Heart left ventricle (tissue), 16 donors: ENCODE measurements at regions of chr2 and their contacts with region 1.

Region 1: DNA sequence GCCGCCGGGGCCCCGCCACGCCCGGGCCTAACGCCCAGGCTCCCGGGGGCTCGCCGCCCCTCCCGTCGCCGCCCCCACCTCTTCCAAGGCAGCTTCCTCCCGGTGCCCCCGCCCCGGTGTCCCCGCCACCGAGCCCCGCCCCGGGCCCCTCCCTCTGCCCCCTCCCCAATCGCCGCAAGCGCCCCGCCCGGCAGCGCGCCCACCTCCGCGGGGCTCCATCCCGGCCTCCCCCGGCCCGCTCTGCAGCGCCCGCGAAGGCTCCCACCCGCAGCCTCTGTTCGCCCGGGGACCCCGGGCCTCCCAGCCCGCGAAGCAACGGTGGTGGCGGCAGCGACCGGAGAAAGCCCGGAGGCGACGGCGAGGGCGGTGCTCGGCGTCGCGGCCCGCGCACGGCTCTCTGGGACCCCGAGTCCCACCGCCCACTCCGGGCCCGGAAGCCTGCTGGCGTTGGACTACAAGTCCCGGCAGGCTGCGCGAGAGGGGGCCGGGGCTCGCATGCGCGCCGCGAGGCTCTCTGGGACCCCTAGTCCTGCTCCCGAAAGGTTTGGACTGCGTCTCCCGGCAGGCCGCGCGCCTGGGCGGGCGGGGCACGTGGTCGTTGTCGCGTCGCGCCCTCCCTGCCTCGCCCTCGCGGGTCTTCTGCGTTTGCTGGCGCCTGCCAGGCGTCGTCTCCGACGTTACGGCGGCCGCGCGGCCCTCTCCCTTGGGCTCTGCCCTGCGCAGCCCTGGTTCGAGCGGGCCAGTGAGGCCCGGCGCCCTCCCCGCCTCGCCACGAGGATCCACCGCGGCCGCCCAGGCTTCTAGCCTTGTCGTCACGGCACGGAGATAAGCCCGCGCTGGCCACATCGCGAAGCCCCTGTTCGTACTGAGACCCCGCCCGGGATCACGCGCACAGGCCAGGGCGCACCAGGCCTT is at the start of gene STK25:
- DNase-seq: peak; percentile 98 to 99 (median 99)
- ATAC-seq: peak; percentile 97 to 99 (median 98)
- H3K4me3 ChIP-seq: peak within 1 kb of the TSS; percentile 61 to 99 (median 90)
- H3K27ac ChIP-seq: peak within 1 kb of the TSS; percentile 58 to 97 (median 89)
- H3K4me1 ChIP-seq: peaks cover 13 to 53% (median 33%) of the 10 kb centered on the region in 12 donors
- H3K27me3 ChIP-seq: no peaks in the 10 kb centered on the region
- CTCF ChIP-seq: no peak
- POLR2A ChIP-seq: peak in 1 of 2 donors; percentile 81
- total RNA-seq, gene STK25: 76.8 to 186 (median 94.7) TPM

Region 2: GRCh38 chr2:240277073-240277806 is 1231.3 kb before region 1 on chr2:
- intact Hi-C with region 1: no loop called
- DNase-seq: peak in 2 of 5 donors; percentile 21 to 32
- ATAC-seq: peak in 3 of 4 donors; percentile 32 to 70 (median 61)
- H3K4me3 ChIP-seq: no peak overlapping the region
- H3K27ac ChIP-seq: no peak overlapping the region
- H3K4me1 ChIP-seq: peaks cover 0 to 18% (median 0%) of the 10 kb centered on the region in 12 donors
- H3K27me3 ChIP-seq: peaks cover 0 to 5% (median 0%) of the 10 kb centered on the region in 9 donors
- CTCF ChIP-seq: no peak
- POLR2A ChIP-seq: no peak

Region 3: DNA sequence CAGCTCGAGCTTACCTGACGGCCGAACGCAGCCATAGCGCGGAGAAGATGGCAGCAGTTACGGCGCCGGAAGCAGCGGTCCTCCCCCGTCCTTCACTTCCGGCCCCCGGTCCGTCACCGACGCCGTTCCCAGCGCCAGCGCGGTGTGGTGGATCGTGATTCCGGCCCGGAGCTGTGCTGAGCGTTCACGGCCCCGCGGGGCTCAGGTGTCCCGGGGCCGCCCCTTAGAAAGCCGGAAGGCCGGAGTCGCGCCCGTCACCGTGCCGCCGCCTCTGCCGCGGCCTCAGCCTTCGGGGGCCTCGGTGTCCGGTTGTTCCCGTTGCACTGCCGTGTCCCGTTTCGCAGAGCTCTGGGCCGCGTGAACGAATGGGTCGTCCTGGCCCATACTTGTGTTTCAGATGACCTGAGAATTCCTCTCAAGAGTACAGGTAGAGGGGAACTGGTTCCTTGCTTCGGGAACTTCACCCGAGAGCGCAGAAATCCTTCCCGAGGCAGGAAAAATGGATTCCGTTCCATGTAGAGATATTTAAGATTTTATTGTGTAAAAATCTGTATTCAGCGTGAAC is 406.2 kb before region 1 on chr2 and contains the start of gene MTERF4:
- intact Hi-C with region 1: loop called in 1 of 10 experiments (anchors 2 kb)
- DNase-seq: peak; percentile 87 to 94 (median 90)
- ATAC-seq: peak; percentile 97 to 100 (median 99)
- H3K4me3 ChIP-seq: peak within 1 kb of the TSS; percentile 59 to 99 (median 86)
- H3K27ac ChIP-seq: peak within 1 kb of the TSS; percentile 68 to 92 (median 85)
- H3K4me1 ChIP-seq: peaks cover 5 to 26% (median 18%) of the 10 kb centered on the region in 12 donors
- H3K27me3 ChIP-seq: no peaks in the 10 kb centered on the region
- CTCF ChIP-seq: peak in 1 of 12 donors; percentile 5
- POLR2A ChIP-seq: no peak
- total RNA-seq, gene MTERF4: 16.4 to 29.1 (median 22.3) TPM

Region 4: DNA sequence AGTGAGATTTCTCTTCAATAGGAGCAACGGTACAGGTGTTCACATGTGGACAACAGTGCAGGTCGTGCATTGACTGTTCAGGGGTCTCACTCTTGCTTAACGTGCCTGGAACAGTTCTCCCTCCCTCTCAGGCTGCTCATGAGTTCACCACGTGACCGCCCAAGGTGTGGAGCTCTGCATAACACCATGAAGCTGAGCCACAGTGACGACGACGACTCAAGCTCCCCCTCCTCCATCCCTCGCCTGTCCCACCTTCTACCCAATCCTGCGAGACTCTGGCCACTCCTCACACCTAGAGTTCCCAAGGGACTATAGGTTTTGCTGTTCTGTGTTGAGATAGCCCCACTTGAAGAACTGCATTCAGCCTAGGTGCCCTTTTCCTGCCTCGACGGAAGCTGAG is 43.0 kb before region 1 on chr2:
- intact Hi-C with region 1: no loop called
- DNase-seq: no peak
- ATAC-seq: no peak
- H3K4me3 ChIP-seq: no peak overlapping the region
- H3K27ac ChIP-seq: no peak overlapping the region
- H3K4me1 ChIP-seq: no peaks in the 10 kb centered on the region
- H3K27me3 ChIP-seq: no peaks in the 10 kb centered on the region
- CTCF ChIP-seq: no peak
- POLR2A ChIP-seq: no peak

Region 5: GRCh38 chr2:241479026-241479898 is 29.2 kb before region 1 on chr2:
- intact Hi-C with region 1: no loop called
- DNase-seq: no peak
- ATAC-seq: no peak
- H3K4me3 ChIP-seq: no peak overlapping the region
- H3K27ac ChIP-seq: no peak overlapping the region
- H3K4me1 ChIP-seq: no peaks in the 10 kb centered on the region
- H3K27me3 ChIP-seq: no peaks in the 10 kb centered on the region
- CTCF ChIP-seq: no peak
- POLR2A ChIP-seq: no peak

Region 6: DNA sequence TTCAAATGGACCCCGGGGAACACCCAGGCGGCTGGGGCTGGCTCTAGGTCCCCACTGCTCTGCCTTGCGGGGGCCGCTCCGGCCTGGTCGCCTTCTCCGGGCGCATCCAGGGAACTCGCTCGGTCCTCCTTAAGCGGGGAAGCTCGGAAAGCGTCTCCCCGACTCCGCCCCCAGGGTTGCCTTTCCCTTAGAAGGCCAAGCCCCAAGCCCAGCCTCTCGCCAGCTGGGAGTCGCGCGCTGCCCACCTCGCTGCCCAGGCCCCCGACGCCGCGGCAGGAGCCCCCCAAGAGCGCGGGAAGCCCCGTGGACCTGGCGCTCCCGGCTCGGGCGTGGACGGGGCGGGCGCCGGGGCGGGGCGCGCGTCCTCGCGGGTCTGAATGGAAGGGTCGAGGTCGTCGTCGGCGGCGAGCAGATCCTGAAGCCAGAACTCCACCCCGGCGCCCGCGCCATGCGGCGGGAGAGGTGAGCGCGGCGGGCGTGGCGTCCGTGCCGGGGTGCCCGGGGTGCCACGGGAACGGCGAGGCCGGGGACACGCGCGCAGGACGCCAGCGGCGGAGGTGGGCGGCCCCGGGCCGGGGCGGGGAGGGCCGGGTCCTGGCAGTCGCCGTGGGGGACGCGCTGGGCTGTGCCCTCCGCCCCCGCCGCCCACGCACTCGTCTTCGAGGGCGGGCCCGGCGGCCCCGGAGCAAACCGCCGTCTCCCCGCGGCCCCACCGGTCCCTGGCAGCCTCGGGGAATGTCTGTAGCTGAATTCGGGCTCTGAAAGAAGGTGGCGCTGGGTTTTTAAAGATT is 50.2 kb after region 1 on chr2 and contains the start of gene BOK:
- intact Hi-C with region 1: loop called in 3 of 10 experiments (anchors 5 kb)
- DNase-seq: peak; percentile 59 to 77 (median 70)
- ATAC-seq: peak in 3 of 4 donors; percentile 35 to 63 (median 39)
- H3K4me3 ChIP-seq: peak within 1 kb of the TSS; percentile 50 to 90 (median 66)
- H3K27ac ChIP-seq: peak within 1 kb of the TSS; percentile 20 to 86 (median 72)
- H3K4me1 ChIP-seq: peaks cover 0 to 51% (median 22%) of the 10 kb centered on the region in 12 donors
- H3K27me3 ChIP-seq: peaks cover 0 to 27% (median 2%) of the 10 kb centered on the region in 9 donors
- CTCF ChIP-seq: no peak
- POLR2A ChIP-seq: no peak
- total RNA-seq, gene BOK: 1.7 to 22.3 (median 8.4) TPM

Region 7: DNA sequence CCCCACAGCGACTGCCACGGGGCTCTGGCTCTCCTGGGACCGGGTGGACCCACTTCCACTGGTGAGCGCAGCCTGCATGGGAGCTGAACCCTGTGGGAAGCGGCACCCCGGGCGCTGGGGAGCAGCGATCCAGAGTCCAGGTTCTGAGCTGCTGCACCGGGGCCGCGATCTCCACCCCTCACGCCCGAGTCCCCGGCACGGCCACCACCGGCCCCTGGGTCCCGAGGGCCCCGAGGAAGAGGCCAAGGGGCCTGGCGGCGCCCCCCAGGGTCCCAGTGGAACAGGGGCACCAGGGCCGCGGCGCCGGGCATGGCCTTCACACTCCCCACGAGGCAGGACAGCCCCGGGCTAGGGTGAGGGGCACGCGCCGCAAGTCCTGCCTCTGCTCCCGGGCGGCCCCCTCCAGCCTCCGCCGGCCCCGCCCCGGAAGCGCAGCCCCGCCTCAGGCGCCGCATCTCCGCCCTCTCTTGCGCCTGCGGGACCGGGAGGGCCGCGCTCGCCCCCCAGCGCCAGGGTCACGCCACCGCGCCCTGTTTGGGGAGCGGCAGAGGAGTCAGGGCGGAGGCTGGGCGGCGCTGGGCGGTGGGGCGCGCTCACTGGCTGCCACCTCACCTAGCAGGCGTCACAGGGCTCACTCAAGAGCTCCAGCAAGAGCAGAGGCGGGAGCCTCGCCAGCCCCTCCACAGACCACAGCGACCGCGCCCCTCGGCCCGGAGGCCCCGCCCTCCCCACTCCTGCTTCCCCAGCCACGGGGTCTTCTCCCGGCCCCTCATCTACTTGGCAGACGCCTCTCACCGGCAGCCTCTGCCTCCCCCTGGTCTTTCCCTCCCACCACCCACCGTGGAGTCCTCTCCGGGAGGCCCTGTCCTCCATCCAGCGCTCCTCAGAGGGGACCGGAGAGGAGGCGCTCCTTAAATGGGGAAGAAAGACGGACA is 101.6 kb after region 1 on chr2:
- intact Hi-C with region 1: loop called in 7 of 10 experiments (anchors 2 to 10 kb)
- DNase-seq: peak; percentile 79 to 92 (median 89)
- ATAC-seq: peak; percentile 81 to 96 (median 96)
- H3K4me3 ChIP-seq: peak overlapping the region; percentile 54 to 69 (median 61)
- H3K27ac ChIP-seq: peak overlapping the region; percentile 3 to 90 (median 72)
- H3K4me1 ChIP-seq: peaks cover 0 to 34% (median 16%) of the 10 kb centered on the region in 12 donors
- H3K27me3 ChIP-seq: no peaks in the 10 kb centered on the region
- CTCF ChIP-seq: peak; percentile 55 to 82 (median 70)
- POLR2A ChIP-seq: peak in 1 of 2 donors; percentile 47

Region 8: DNA sequence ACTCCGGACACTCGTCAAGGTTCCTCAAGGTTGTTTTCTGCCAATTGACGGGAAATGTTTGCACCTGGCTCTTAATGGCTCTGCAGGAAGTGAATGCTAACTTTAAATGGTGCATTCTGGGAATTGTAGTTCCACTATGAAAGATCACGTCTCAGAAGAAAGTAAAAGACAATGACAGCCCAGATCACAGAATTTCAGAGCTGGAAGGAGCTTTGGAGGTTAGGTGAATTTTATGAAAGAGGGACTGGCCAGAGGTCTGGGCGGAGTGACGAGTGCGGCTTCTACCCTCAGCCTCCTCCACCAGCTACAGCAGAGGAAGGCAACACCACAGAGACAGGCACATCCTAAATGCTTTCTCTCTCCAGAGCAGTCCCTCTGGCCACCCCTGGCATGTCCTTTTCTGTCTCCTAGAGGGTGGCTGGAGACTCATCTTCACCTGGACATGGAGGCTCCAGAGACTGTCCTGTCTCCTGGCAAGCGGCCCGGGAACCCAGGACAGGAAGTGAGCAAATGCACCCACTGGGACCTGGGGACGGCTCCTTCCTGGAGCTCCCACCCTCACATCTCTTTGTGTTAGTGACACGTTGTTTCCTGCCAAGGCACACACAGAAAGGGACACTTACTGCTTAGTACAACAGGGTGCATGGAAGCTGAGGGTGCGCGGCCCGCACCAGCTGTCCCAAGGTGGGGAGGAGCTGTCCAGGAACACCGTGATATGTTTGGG is 109.1 kb after region 1 on chr2:
- intact Hi-C with region 1: loop called in 6 of 10 experiments (anchors 5 to 10 kb)
- DNase-seq: peak; percentile 59 to 85 (median 75)
- ATAC-seq: peak; percentile 57 to 87 (median 60)
- H3K4me3 ChIP-seq: peak overlapping the region; percentile 17 to 52 (median 45)
- H3K27ac ChIP-seq: peak overlapping the region; percentile 62 to 92 (median 80)
- H3K4me1 ChIP-seq: peaks cover 0 to 47% (median 24%) of the 10 kb centered on the region in 12 donors
- H3K27me3 ChIP-seq: no peaks in the 10 kb centered on the region
- CTCF ChIP-seq: no peak
- POLR2A ChIP-seq: no peak

Region 9: GRCh38 chr2:241637000-241637791 is 128.7 kb after region 1 on chr2 and contains the starts of genes ATG4B and THAP4:
- intact Hi-C with region 1: loop called in 1 of 10 experiments (anchors 2 kb)
- DNase-seq: peak; percentile 89 to 94 (median 92)
- ATAC-seq: peak; percentile 78 to 92 (median 90)
- H3K4me3 ChIP-seq: peak within 1 kb of the TSS; percentile 55 to 94 (median 88)
- H3K27ac ChIP-seq: peak within 1 kb of the TSS; percentile 96 to 100 (median 99)
- H3K4me1 ChIP-seq: peaks cover 8 to 57% (median 45%) of the 10 kb centered on the region in 12 donors
- H3K27me3 ChIP-seq: no peaks in the 10 kb centered on the region
- CTCF ChIP-seq: no peak
- POLR2A ChIP-seq: peak in 1 of 2 donors; percentile 59
- total RNA-seq, gene ATG4B: 37.8 to 67.9 (median 48.3) TPM
- total RNA-seq, gene THAP4: 61.7 to 106 (median 74.2) TPM

Region 10: GRCh38 chr2:241734467-241735208 is 226.1 kb after region 1 on chr2 and contains the start of gene D2HGDH:
- intact Hi-C with region 1: loop called in 1 of 10 experiments (anchors 10 kb)
- DNase-seq: peak; percentile 94 to 98 (median 94)
- ATAC-seq: peak; percentile 81 to 96 (median 94)
- H3K4me3 ChIP-seq: peak within 1 kb of the TSS; percentile 67 to 100 (median 94)
- H3K27ac ChIP-seq: peak within 1 kb of the TSS; percentile 70 to 96 (median 90)
- H3K4me1 ChIP-seq: peaks cover 0 to 20% (median 12%) of the 10 kb centered on the region in 12 donors
- H3K27me3 ChIP-seq: no peaks in the 10 kb centered on the region
- CTCF ChIP-seq: no peak
- POLR2A ChIP-seq: peak in 1 of 2 donors; percentile 92
- total RNA-seq, gene D2HGDH: 9.2 to 24.1 (median 20.9) TPM